Common myeloid progenitor, CD34-positive (primary cell): ENCODE measurements at regions of chr5 and their contacts with region 1.

Region 1: DNA sequence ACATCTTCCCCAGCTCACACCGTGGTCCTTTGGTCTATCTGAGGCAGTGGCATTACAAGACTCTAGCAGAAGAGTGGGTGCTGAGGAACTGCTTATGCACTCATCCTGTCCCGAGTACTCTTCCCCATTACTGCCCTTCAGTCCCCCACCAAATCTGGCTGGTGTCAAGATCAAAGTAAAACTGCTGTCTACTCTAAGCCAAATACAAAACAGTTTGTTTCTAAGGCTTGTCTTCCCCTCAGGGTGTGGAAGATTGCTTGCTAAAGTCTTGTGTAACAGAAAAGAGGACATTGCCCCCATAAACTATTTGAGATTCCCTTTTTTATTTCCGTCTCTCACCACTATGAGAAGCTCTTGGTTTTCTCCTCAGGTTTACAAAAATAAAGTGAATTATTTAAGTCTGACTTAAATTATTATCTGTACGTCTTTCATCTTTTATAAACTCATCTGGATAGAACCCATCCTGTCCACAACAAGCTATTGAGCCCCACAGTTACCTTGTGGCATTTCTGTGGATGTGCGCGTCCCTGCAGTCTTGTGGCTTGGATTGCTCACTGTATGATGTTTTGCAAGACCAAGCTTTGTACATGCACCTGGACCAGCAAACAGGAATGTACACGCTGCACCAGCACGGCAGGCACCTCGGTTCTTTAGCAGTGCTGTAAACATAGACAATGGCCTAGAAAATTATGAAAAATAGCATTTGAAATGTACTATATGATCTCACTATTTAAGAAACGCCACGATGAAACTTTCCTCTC is 61.0 kb downstream of the CYSTM1 start:
- DNase-seq: no peak
- H3K4me3 ChIP-seq: no peak overlapping the region
- H3K27ac ChIP-seq: no peak overlapping the region
- H3K4me1 ChIP-seq: no peaks in the 10 kb centered on the region
- H3K27me3 ChIP-seq: peaks cover 0 to 2% (median 0%) of the 10 kb centered on the region in 5 experiments

Region 2: GRCh38 chr5:140287801-140288521 is 52.0 kb after region 1 on chr5:
- CTCF ChIA-PET with region 1: no interaction called
- POLR2A ChIA-PET with region 1: no interaction called
- DNase-seq: no peak
- H3K4me3 ChIP-seq: no peak overlapping the region
- H3K27ac ChIP-seq: no peak overlapping the region
- H3K4me1 ChIP-seq: peaks cover 0 to 7% (median 1%) of the 10 kb centered on the region in 4 experiments
- H3K27me3 ChIP-seq: no peaks in the 10 kb centered on the region

Region 3: DNA sequence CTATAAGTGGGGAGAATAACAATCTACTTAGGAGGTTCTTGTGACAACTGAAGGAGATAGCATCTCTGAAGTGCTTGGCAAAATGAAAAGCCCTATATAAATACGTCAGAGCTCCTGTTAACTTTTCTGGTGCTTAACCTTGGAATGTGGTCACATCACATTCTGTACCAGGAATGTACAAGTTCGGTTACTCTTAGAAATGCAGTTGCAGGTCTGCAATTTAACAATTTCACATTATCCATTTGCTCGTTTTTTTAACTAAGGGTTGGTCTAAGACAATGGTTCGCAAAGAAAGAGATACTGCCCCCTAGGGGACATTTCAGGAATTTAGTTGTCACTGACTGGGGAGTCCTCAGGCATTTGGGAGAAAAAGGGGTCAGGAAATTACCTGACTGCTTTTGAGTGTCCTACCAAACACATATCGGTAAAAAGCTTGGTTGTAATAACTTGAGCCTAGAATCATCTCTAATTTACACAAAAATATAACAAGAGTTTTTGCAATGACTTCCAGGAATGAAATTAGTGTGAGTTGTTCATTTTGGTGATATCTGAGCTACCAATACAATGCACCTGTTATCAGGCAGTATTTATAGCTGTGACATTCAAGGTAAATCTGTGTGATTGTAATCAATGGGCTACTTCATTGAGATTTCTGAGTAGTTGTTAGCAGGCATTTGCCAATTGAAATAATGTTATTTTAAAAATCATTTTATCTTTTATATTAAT is 115.8 kb after region 1 on chr5:
- CTCF ChIA-PET with region 1: interaction called, 552 read pairs
- POLR2A ChIA-PET with region 1: no interaction called
- DNase-seq: peak; percentile 70 to 85 (median 76)
- H3K4me3 ChIP-seq: no peak overlapping the region
- H3K27ac ChIP-seq: no peak overlapping the region
- H3K4me1 ChIP-seq: peaks cover 2 to 14% (median 11%) of the 10 kb centered on the region in 4 experiments
- H3K27me3 ChIP-seq: no peaks in the 10 kb centered on the region